GM13976 (cell line): ENCODE measurements at regions of chr1 and their contacts with region 1.

Region 1: DNA sequence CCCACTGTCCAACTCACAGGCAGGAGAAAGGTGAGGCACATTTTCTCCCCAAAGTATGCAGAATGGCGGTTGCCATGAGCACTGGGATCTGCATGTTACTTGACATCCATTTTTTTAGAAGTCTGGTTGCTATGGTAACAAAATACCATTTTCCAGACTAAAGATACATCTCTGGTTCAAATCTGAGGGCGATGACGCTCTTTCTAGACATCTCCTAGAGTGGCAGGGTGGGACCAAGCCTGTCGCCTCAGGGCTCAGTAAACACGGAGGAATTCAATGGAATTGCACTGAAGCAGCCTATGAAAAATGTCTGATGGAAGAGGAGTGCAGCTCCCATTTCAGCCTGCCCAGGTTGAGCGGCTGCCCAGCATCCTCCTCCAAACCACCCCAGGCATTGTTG is 21.5 kb upstream of the FAM43B start:
- DNase-seq: no peak
- CTCF ChIP-seq: no peak

Region 2: GRCh38 chr1:20212685-20213331 is 318.1 kb before region 1 on chr1:
- in situ Hi-C with region 1: no loop called
- DNase-seq: peak; percentile 81
- CTCF ChIP-seq: peak; percentile 30

Region 3: DNA sequence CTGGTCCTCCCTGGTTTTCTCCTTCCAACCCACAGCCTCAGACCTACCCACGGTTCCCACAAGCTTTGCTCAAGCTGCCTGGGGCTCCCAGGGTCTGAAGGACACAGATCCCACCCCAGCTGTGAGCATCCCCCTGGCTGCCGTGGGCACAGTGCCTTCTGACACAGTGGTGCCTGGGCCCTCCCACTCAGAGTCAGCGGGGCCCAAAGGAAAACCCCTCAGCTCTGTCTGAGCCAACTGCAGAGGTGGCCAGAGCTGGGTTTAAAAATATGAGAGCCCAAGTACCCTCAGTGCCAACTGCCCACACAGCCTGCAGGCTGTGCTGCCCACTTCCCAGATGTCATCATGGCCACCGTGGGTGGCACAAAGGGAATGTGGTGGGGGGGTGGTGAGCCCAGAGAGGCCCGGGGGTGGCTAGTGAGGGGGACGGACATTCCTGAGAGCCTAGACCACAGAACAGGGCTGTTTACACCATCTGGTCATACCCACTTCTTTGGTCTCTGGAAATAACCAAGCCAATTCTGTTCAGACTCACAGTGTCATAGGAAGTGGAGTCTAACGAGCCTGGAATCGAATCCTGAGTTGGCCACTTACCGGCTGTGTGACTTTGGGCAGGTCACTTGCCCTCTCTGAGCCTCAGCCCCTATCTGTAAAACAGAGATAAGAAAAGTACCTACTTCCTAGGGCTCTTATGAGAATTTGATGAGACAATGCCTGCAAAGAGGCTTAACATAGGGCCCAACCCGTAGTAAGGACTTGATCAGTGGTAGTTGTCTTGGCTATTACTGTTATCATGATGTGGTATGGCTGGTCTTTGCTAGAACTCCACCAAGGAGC is 130.3 kb before region 1 on chr1:
- in situ Hi-C with region 1: no loop called
- DNase-seq: no peak
- CTCF ChIP-seq: no peak

Region 4: DNA sequence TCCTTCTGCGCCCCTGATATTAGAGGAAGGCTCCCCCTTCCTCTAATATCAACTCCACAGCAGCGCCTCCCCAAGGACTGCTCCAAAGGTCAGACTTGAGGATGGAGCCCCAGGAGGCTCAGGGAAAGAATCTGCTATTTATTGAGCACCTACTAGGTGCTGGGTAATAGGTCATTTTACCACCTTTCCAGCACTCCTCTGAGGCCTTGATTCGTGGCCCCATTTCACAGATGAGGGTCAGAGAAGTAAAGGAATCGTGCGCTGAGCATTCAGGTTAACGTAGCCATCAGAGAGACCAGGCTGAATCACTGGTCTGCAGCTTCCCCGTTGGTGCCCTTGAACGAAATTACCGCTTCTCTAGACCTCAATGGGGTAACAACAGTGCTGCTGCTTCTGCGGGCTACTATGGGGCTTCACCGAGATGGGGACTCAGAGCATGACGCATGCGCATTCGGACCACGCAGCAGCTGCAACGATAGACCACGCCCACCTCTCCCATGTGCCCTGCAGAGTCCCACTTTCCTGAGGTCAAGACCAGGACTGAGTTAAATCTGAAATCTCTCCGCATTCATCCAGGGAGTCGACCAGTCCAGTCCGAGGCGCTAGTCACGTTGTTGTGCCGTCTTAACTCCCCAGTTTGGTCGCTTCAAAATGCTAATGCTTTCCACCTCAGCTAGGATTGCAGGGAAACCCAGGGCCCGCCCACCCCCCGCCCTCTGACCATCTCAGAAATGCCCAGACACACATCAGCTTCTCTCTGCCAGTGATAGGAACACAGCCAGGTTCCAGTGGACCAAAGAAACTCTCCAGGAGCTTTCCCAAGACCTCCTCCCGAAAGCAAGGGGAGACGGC is 57.8 kb before region 1 on chr1:
- in situ Hi-C with region 1: no loop called
- DNase-seq: peak; percentile 75
- CTCF ChIP-seq: no peak

Region 5: GRCh38 chr1:20871419-20871818 is 340.5 kb after region 1 on chr1:
- in situ Hi-C with region 1: no loop called
- DNase-seq: no peak
- CTCF ChIP-seq: no peak

Region 6: GRCh38 chr1:21216835-21217811 is 686.2 kb after region 1 on chr1:
- in situ Hi-C with region 1: loop called (anchors 25 kb)
- DNase-seq: peak; percentile 81
- CTCF ChIP-seq: peak; percentile 79